Activated CD4-positive, alpha-beta T cell treated with anti-CD3 and anti-CD28 coated beads, Interleukin-2, amount 10 ng/mL, durations not matched to agents 24 days and 14 days (primary cell): ENCODE measurements at regions of chr5 and their contacts with region 1.

Region 1: GRCh38 chr5:80255732-80256479 is at the start of gene SERINC5:
- DNase-seq: peak; percentile 95
- H3K4me3 Mint-ChIP-seq: peak within 1 kb of the TSS; percentile 97
- H3K27ac Mint-ChIP-seq: peak within 1 kb of the TSS; percentile 99
- H3K4me1 Mint-ChIP-seq: peaks cover 44% of the 10 kb centered on the region
- H3K27me3 Mint-ChIP-seq: no peaks in the 10 kb centered on the region
- total RNA-seq, gene SERINC5: 19.2 and 21.3 TPM in 2 replicates

Region 2: GRCh38 chr5:78648359-78649210 is 1607.3 kb before region 1 on chr5 and contains the start of gene LHFPL2:
- intact Hi-C with region 1: no loop called
- DNase-seq: peak; percentile 72
- H3K4me3 Mint-ChIP-seq: peak within 1 kb of the TSS; percentile 72
- H3K27ac Mint-ChIP-seq: no peak within 1 kb of the TSS
- H3K4me1 Mint-ChIP-seq: peaks cover 7% of the 10 kb centered on the region
- H3K27me3 Mint-ChIP-seq: peaks cover 55% of the 10 kb centered on the region
- total RNA-seq, gene LHFPL2: 0.05 and 0.30 TPM in 2 replicates

Region 3: DNA sequence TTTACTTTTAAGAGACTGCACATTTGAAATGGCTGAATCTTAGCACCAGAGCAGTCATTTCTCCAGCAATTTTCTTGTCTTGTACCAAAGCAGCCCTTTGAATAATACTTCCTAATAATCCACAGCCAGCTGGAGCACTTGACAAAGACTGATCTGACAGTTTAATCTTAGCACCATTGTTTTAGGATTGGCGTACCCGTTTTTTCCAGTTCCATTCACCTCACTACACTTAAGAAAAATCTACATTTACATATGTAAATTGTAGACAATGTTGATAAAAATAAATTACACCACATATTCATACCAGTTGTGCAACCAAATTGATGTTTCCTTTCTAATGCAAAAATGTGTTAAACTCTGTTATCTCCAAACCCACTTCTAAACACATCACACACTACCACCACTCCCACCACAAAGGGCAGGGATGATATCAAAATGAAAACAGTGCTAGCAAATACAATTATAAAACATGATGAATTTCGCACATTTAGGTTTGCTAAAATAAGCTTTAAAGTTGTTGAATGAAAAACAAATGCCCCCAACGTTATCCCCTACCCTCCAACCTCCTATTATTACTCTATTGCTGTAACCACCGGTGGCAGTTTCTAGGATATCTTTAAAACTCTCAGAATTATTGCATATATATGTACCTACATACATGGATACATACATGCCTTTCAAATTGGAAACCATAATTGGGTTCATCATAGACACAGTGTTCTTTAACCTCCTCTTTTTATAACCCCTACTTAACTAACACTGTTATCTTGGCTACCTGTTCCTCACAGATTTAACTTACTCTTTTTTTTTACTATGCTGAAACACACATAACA is 21.6 kb before region 1 on chr5:
- intact Hi-C with region 1: loop called (anchors 2 kb)
- DNase-seq: no peak
- H3K4me3 Mint-ChIP-seq: no peak overlapping the region
- H3K27ac Mint-ChIP-seq: peak overlapping the region; percentile 62
- H3K4me1 Mint-ChIP-seq: peaks cover 49% of the 10 kb centered on the region
- H3K27me3 Mint-ChIP-seq: no peaks in the 10 kb centered on the region

Region 4: DNA sequence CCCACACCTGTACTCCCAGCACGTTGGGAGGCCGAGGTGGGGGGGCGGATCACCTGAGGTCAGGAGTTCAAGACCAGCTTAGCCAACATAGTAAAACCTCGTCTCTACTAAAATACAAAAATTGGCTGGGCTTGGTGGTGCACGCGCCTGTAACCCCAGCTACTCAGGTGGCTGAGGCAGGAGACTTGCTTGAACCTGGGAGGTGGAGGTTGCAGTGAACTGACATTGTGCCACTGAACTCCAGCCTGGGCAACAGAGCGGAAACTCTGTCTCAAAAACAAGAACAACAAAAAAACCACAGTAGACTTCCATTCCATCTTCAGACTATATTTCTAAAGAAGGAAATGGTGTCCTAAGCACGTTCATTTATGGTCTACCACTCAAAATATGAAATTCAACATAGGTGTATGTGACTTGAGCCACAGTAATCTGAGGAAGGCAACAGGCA is 14.1 kb after region 1 on chr5:
- intact Hi-C with region 1: loop called (anchors 1 kb)
- DNase-seq: peak; percentile 78
- H3K4me3 Mint-ChIP-seq: peak overlapping the region; percentile 53
- H3K27ac Mint-ChIP-seq: peak overlapping the region; percentile 92
- H3K4me1 Mint-ChIP-seq: peaks cover 33% of the 10 kb centered on the region
- H3K27me3 Mint-ChIP-seq: no peaks in the 10 kb centered on the region